Activated T-helper 1 cell treated with anti-CD3 and anti-CD28 coated beads, Interleukin-12 subunit alpha, Interleukin-12 subunit beta, Interleukin-2, Interleukin-4 antibody, amounts not matched to agents 30 ng/mL and 10 ng/mL and 1 ng/mL, durations not matched to agents 14 hours and 24 hours and 36 hours (primary cell): ENCODE measurements at regions of chr2 and their contacts with region 1.

Region 1: GRCh38 chr2:230326453-230327417 is at the start of gene SP140L:
- DNase-seq: peak; percentile 73
- H3K4me3 Mint-ChIP-seq: peak within 1 kb of the TSS; percentile 98
- H3K27ac Mint-ChIP-seq: peak within 1 kb of the TSS; percentile 93
- H3K4me1 Mint-ChIP-seq: peaks cover 87% of the 10 kb centered on the region
- H3K27me3 Mint-ChIP-seq: no peaks in the 10 kb centered on the region
- total RNA-seq, gene SP140L: 57.4 and 57.8 TPM in 2 replicates

Region 2: GRCh38 chr2:230219419-230220331 is 107.1 kb before region 1 on chr2 and contains the start of gene SP110:
- intact Hi-C with region 1: loop called (anchors 2 kb)
- DNase-seq: peak; percentile 84
- H3K4me3 Mint-ChIP-seq: peak within 1 kb of the TSS; percentile 93
- H3K27ac Mint-ChIP-seq: peak within 1 kb of the TSS; percentile 95
- H3K4me1 Mint-ChIP-seq: peaks cover 76% of the 10 kb centered on the region
- H3K27me3 Mint-ChIP-seq: no peaks in the 10 kb centered on the region
- total RNA-seq, gene SP110: 141 and 142 TPM in 2 replicates

Region 3: DNA sequence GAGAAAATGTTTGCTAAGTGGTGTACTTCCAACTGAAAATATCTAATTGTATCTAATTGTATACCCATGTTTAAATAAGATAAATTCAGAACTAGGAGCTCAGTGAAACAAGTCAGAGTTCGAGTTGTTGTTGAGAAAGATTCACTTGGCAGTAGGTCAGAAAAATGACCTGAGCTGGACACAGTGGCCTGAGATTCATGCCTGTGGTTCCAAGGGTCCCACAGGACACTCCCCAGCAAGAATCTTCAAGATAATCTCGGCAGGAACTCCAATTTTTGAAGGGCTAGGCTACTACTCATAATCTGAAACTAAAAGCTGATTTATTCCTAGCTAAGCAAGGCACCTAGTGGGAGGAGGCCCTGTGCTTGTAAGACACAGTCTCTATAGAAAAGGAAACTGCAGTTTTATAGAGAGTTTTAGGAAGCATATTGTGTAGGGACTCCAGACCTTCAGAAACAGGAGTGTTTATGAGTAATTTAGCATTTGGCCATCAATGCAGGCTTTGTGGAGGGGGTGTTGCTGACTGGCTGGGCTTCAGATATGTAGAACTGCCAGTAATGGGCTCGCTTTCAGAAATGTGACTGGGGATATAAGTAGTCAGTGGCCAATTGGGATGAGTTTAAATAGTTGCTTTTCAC is 58.0 kb before region 1 on chr2:
- intact Hi-C with region 1: no loop called
- DNase-seq: no peak
- H3K4me3 Mint-ChIP-seq: peak overlapping the region; percentile 43
- H3K27ac Mint-ChIP-seq: peak overlapping the region; percentile 80
- H3K4me1 Mint-ChIP-seq: peaks cover 66% of the 10 kb centered on the region
- H3K27me3 Mint-ChIP-seq: no peaks in the 10 kb centered on the region